ENCODE measurements at regions of chr6 and their contacts with region 1.

Region 1: GRCh38 chr6:52664186-52664990 is 6.5 kb upstream of the TMEM14A start:
- DNase-seq: peak; percentile 68
- H3K4me3 Mint-ChIP-seq: no peak overlapping the region
- H3K27ac Mint-ChIP-seq: no peak overlapping the region
- H3K4me1 Mint-ChIP-seq: peaks cover 10% of the 10 kb centered on the region
- H3K27me3 Mint-ChIP-seq: no peaks in the 10 kb centered on the region

Region 2: GRCh38 chr6:52361945-52362442 is 302.4 kb before region 1 on chr6 and contains the start of gene PAQR8:
- intact Hi-C with region 1: loop called (anchors 1 kb)
- DNase-seq: peak; percentile 75
- H3K4me3 Mint-ChIP-seq: peak within 1 kb of the TSS; percentile 96
- H3K27ac Mint-ChIP-seq: peak within 1 kb of the TSS; percentile 84
- H3K4me1 Mint-ChIP-seq: peaks cover 33% of the 10 kb centered on the region
- H3K27me3 Mint-ChIP-seq: peaks cover 7% of the 10 kb centered on the region
- total RNA-seq, gene PAQR8: 2.5 and 2.8 TPM in 2 replicates

Region 3: DNA sequence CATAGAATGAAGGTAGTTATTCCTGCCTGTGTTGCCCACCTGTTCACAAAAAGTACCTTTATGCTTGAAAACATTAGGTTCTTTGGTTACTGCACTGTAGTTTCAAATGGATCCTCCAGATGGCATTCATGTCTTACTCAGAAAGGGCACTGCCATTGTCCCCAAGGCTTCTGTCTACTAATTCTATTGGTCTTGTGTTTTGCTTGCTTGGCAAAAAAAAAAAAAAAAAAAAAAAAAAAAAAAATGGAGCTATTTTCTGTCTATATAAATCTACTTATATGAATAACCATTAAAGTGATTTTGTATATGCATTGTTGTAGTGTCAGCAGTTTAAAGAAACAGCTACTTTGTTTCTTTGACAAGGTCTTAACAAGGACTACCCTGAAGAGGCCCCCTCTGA is 256.9 kb before region 1 on chr6:
- intact Hi-C with region 1: loop called (anchors 1 kb)
- DNase-seq: no peak
- H3K4me3 Mint-ChIP-seq: no peak overlapping the region
- H3K27ac Mint-ChIP-seq: no peak overlapping the region
- H3K4me1 Mint-ChIP-seq: no peaks in the 10 kb centered on the region
- H3K27me3 Mint-ChIP-seq: peaks cover 3% of the 10 kb centered on the region

Region 4: DNA sequence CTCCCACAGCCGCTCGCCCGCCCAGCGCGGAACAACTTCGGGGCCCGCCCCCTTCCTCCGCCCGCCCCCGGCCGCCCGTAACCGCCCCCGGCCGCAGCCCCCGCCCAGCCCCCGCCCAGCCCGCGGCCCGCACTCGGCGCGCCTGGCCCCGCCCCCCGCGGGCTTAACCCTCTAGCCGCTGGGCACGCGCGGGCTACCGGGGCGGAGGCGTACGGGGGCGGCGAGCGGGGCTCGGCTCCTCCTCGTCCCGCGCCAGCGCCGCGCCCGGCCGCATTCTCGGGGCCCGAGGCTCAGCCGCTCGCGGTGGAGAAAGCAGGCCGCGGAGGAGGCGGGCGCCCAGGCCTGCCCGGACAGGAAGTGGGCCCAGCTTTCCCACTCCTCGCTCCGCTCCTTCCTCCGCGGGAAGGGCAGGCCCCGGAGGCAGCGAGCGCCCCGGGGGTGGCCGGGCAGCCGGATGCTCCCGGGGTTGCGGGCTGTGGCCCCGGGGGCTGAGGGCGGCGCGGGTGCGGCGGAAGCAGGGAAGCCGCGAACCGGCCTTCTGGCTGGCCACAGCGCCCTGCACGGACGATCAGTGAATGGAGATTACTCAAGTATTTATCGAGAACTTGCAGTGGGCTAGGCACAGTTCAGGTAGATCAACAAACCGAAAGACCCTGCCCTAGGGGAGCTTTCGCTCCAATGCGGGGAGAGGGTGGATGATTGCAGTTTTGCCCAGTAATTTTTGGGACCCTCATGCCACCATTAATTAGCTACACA is 87.2 kb before region 1 on chr6 and contains the start of gene TRAM2:
- intact Hi-C with region 1: loop called (anchors 1 kb)
- DNase-seq: peak; percentile 69
- H3K4me3 Mint-ChIP-seq: peak within 1 kb of the TSS; percentile 79
- H3K27ac Mint-ChIP-seq: peak within 1 kb of the TSS; percentile 66
- H3K4me1 Mint-ChIP-seq: peaks cover 39% of the 10 kb centered on the region
- H3K27me3 Mint-ChIP-seq: peaks cover 14% of the 10 kb centered on the region
- total RNA-seq, gene TRAM2: 2.1 and 2.5 TPM in 2 replicates

Region 5: DNA sequence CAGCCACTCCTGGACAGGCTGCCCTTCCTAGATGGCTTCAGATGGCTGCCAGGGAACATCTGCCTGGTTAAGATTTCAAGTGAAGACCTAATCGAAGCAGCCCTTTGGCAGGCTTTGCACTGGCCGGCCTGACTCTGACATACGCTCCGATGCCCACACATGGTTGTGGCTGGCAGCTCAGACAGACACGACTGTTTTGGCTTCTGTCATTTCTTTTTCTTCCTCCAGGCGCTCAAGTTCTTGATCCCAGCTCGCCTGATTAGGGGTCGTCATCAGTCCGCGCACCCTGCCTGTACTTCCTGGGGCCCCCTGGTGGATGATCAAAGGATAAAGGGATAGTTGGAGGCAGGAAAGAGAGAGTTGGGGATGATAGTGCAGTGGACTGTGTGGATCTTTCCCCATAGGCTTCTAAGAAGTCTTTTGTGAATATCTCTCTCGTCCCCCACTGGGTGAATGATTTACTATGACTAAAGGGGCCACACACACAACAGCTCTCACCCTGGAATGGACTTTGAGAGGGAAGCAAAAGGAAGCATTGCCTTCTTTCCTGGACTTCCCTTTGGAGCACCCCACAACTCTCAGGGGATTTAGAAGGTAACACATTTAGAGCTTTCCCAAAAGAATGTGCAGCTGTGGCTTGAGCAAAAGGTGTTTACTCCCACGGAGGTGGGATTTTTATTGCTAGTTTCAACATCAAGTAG is 66.1 kb before region 1 on chr6:
- intact Hi-C with region 1: loop called (anchors 5 kb)
- DNase-seq: no peak
- H3K4me3 Mint-ChIP-seq: no peak overlapping the region
- H3K27ac Mint-ChIP-seq: no peak overlapping the region
- H3K4me1 Mint-ChIP-seq: peaks cover 13% of the 10 kb centered on the region
- H3K27me3 Mint-ChIP-seq: peaks cover 4% of the 10 kb centered on the region

Region 6: DNA sequence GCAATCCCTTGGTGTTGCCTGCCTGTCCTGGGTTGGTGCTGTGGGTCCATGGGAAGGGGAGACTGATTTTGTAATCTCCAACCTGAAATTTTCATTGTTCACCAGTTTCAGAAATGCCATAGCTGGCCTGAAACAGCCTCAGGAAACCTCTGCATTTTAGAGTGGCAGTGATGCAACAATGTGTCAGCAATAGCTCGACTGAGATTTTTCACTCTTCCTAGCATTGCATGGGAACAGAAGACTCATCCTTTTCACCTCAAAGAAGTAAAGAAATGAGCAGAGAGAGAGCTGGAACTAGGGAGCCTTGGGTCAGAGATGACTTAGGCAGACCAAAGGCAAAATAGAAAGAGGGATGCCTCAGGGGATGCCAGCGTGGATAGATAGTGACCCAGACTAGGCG is 17.2 kb before region 1 on chr6:
- intact Hi-C with region 1: loop called (anchors 1 kb)
- DNase-seq: no peak
- H3K4me3 Mint-ChIP-seq: no peak overlapping the region
- H3K27ac Mint-ChIP-seq: no peak overlapping the region
- H3K4me1 Mint-ChIP-seq: peaks cover 8% of the 10 kb centered on the region
- H3K27me3 Mint-ChIP-seq: peaks cover 28% of the 10 kb centered on the region

Region 7: DNA sequence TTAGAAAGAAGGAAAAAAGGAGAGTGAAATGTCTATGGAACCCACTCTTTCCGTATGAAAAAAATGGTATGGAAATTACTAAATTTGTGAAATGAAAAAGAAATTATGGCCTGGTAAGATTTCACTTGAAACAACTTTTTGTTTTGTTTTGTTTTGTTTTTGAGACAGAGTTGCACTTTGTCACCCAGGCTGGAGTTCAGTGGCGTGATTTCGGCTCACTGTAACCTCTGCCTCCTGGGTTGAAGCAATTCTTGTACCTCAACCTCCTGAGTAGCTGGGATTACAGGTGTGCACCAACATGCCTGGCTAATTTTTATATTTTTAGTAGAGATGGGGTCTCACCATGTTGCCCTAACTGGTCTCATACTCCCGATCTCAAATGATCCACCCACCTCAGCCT is 194.0 kb after region 1 on chr6:
- intact Hi-C with region 1: no loop called
- DNase-seq: no peak
- H3K4me3 Mint-ChIP-seq: no peak overlapping the region
- H3K27ac Mint-ChIP-seq: no peak overlapping the region
- H3K4me1 Mint-ChIP-seq: no peaks in the 10 kb centered on the region
- H3K27me3 Mint-ChIP-seq: peaks cover 9% of the 10 kb centered on the region

Region 8: GRCh38 chr6:53064726-53065215 is 400.4 kb after region 1 on chr6:
- intact Hi-C with region 1: loop called (anchors 1 kb)
- DNase-seq: peak; percentile 94
- H3K4me3 Mint-ChIP-seq: peak overlapping the region; percentile 99
- H3K27ac Mint-ChIP-seq: peak overlapping the region; percentile 99
- H3K4me1 Mint-ChIP-seq: peaks cover 46% of the 10 kb centered on the region
- H3K27me3 Mint-ChIP-seq: peaks cover 2% of the 10 kb centered on the region

Measured in activated T-helper 1 cell treated with anti-CD3 and anti-CD28 coated beads, Interleukin-12 subunit alpha, Interleukin-12 subunit beta, Interleukin-2, Interleukin-4 antibody, amounts not matched to agents 30 ng/mL and 10 ng/mL and 1 ng/mL, durations not matched to agents 14 hours and 24 hours and 36 hours (primary cell).